ENCODE measurements at regions of chr2 and their contacts with region 1.

Region 1: DNA sequence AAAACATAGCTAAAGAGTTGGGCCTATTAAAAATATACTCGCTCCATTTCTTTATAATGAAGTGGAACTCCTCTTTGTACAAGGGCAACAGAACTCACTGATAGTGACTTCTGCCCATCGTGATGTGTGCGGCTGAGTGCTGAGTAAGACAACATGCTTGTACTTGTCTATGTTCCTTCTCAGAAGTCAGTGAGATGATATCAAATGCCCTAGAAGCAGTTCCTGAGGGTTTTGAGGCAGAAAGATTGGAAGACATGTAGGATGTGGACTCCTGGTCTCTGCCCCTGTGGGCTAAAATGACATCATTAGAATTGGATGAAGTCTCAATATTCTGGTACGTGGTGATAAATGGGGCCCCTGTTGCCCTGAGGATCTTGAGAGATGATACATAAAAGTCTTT is 73.8 kb downstream of the USP40 start:
- DNase-seq: peak; percentile 93
- H3K4me3 ChIP-seq: no peak overlapping the region
- H3K27ac ChIP-seq: peak overlapping the region; percentile 97
- H3K4me1 ChIP-seq: peaks cover 49% of the 10 kb centered on the region
- H3K27me3 ChIP-seq: no peaks in the 10 kb centered on the region
- CTCF ChIP-seq: no peak

Region 2: DNA sequence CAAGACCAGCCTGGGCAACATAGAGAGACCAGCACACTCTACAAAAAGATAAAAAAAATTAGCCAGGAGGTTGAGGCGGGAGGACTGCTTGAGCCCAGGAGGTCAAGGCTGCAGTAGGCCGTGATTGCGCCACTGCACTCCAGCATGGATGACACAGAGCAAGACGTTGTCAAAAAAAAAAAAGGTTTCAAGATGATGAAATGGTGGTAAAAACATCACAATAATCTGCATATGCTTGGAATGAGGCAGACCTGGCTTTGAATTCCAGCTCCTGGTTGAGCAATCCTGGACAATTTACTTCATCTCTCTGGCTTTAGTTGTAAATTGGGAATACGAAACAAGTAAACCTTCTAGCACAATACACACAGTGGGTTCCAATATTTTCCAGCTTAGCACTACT is 49.7 kb after region 1 on chr2:
- CTCF ChIA-PET with region 1: no interaction called
- dilution Hi-C with region 1: loop called (anchors 5 kb)
- in situ Hi-C with region 1: no loop called
- intact Hi-C with region 1: loop called (anchors 2 kb)
- DNase-seq: peak; percentile 68
- H3K4me3 ChIP-seq: no peak overlapping the region
- H3K27ac ChIP-seq: no peak overlapping the region
- H3K4me1 ChIP-seq: peaks cover 3% of the 10 kb centered on the region
- H3K27me3 ChIP-seq: no peaks in the 10 kb centered on the region
- CTCF ChIP-seq: no peak

Region 3: GRCh38 chr2:234643407-234643806 is 1150.6 kb after region 1 on chr2:
- CTCF ChIA-PET with region 1: no interaction called
- dilution Hi-C with region 1: no loop called
- in situ Hi-C with region 1: no loop called
- intact Hi-C with region 1: no loop called
- DNase-seq: no peak
- H3K4me3 ChIP-seq: no peak overlapping the region
- H3K27ac ChIP-seq: no peak overlapping the region
- H3K4me1 ChIP-seq: no peaks in the 10 kb centered on the region
- H3K27me3 ChIP-seq: no peaks in the 10 kb centered on the region
- CTCF ChIP-seq: no peak

Measured in mammary epithelial cell (primary cell).